Stomach (tissue), 19 donors: ENCODE measurements at regions of chr1 and their contacts with region 1.

Region 1: GRCh38 chr1:71049951-71050598 is 2.5 kb upstream of the PTGER3 start:
- DNase-seq: peak in 1 of 2 donors; percentile 92
- H3K4me3 ChIP-seq: no peak overlapping the region
- H3K27ac ChIP-seq: no peak overlapping the region
- H3K4me1 ChIP-seq: peaks cover 8 to 33% (median 27%) of the 10 kb centered on the region in 4 donors
- H3K27me3 ChIP-seq: peaks cover 0 to 36% (median 22%) of the 10 kb centered on the region in 3 donors
- CTCF ChIP-seq: peak in 5 of 7 experiments; percentile 56 to 82 (median 63)
- EP300 ChIP-seq: no peak
- POLR2A ChIP-seq: no peak

Region 2: DNA sequence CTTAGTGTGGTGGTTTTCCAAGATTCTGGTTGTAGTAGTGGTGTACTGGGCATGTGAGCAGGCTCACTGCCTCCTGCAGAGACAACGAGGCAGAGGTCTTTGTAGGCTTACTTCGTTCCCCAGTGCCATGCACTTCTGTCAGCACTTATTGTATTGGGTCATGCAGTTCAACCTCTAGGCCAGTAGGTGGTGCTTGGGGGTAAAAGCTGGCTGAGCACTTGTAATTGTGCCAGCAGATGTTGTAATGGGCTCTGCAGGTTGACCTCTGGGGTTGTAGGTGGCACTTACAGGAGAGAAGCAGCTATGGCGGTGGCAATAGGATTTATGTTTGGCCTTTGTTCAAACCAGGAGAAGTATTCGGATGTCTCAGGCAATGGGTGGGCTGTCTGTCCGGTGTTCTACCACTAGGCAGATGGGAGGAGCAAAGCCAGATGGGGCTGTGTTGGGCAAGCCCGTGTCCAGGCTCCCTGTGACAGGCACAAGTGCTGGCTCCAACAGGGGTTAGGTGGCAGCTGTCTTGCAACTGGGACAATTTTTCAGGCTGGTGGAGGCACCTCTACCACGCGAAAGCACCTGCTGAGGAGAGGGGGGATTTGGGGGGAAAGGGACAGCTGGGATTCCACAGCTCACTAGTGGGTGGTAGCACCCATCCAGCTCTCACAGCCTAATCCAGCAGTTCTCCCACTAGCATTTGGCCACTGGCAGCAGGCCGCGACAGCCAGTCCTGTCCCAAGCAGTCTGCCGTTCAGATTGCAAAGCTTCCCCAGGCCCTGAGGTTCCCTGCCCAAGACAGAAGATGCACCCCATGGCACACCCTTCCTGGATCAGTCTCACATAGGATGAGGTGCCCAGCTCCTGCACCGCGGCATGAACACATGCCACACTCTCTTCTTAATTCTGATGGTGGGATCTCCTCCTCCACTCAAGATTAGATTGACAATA is 364.5 kb before region 1 on chr1:
- intact Hi-C with region 1: loop called (anchors 10 kb)
- DNase-seq: peak; percentile 69 to 79
- H3K4me3 ChIP-seq: no peak overlapping the region
- H3K27ac ChIP-seq: no peak overlapping the region
- H3K4me1 ChIP-seq: peaks cover 0 to 5% (median 0%) of the 10 kb centered on the region in 4 donors
- H3K27me3 ChIP-seq: no peaks in the 10 kb centered on the region
- CTCF ChIP-seq: peak in 5 of 7 experiments; percentile 81 to 87 (median 82)
- EP300 ChIP-seq: no peak
- POLR2A ChIP-seq: no peak

Region 3: DNA sequence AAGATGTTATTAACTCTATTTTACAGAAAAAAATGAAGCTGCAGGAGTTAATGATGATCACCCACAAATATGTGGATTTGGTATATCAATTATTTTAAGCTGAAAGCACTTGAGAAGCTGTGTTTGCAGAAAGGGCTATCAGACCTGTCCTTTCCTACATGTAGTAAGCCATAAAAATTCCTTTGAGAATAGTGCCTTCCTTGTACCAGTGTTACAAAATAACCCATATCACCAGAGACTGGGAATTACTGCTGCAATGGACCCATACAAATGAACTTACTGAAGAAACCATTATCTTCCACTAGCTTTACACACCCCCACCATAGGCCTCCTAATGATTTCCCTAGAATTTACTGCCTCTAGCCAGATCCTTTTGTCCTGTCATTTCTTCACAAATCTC is 129.9 kb after region 1 on chr1:
- intact Hi-C with region 1: no loop called
- DNase-seq: no peak
- H3K4me3 ChIP-seq: no peak overlapping the region
- H3K27ac ChIP-seq: no peak overlapping the region
- H3K4me1 ChIP-seq: no peaks in the 10 kb centered on the region
- H3K27me3 ChIP-seq: no peaks in the 10 kb centered on the region
- CTCF ChIP-seq: no peak
- EP300 ChIP-seq: no peak
- POLR2A ChIP-seq: no peak